Right ventricle myocardium superior (tissue), 1 donor: ENCODE measurements at regions of chr4 and their contacts with region 1.

Region 1: DNA sequence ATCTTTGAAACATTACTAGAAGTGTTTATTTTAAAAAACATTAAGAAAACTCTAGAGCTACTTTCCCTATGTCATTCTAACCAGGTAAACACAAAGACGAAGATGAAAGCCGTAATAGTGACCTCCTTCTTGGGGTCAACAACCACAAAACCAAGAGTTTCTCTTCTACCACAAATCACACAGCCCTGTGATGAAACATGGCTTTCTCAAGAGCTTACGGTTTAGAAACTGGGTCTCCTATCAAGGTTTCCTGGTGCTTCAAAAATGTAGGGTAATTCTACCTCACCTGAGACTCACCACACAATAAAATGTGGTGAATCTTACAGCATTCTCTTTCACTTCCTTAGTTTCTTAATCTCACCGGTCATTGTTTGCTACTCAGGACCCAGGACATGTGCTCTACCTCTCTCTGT is 50.9 kb downstream of the CORIN start:
- DNase-seq: no peak
- ATAC-seq: no peak

Region 2: GRCh38 chr4:47562297-47562696 is 224.7 kb before region 1 on chr4:
- intact Hi-C with region 1: no loop called
- DNase-seq: no peak
- ATAC-seq: no peak

Region 3: GRCh38 chr4:47831026-47831679 is 44.2 kb after region 1 on chr4:
- intact Hi-C with region 1: loop called (anchors 5 kb)
- DNase-seq: peak; percentile 53
- ATAC-seq: peak; percentile 53

Region 4: DNA sequence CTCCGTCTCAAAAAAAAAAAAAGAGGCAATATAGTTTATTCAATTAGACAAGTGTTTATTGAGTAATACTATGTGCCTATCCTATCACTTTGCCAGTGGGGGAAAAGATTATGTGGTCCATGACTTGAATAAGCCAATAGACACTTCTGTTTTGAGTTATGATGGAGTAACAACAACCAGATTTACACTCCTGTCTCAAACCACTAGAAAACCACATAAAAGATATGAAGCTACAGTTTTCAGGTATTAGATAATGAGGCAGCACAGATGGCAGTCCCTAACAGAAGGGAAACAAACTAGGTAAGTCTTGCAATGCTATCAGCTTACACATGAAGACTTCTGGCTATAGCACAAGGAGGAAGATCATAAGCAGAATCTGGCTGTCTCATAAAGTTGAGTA is 105.0 kb after region 1 on chr4:
- intact Hi-C with region 1: no loop called
- DNase-seq: no peak
- ATAC-seq: no peak